Activated CD8-positive, alpha-beta T cell treated with anti-CD3 and anti-CD28 coated beads for 36 hours (primary cell): ENCODE measurements at regions of chr12 and their contacts with region 1.

Region 1: DNA sequence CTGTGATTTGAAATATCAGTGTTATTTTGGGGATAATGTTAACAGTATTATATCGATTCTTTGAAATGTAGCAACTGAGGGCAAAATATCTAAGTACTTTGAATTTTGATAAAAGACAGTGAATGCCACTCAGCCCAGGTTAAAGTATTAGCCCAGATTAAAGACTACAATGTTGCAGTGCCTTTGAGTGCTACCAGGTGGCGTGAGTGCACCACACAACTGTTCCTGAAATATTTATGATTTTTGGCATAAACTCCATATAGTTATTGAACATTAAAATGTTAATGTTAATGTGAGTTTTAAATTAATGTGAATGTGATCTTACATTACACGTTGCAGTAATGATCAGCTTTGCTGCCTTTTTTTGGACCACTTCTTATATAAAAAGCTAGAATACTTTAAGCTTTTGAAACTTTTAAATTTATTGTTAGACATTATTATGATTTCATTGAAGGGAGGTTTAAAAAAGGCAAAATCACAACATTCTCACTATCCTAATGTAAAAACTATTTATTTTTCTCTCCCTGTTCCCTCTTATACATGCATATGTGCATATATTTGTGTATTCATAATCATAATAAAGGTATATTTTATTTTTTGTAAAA is 22.5 kb downstream of the MRPS35 start:
- DNase-seq: peak; percentile 47
- ATAC-seq: peak; percentile 79
- H3K4me3 Mint-ChIP-seq: no peak overlapping the region
- H3K27ac Mint-ChIP-seq: no peak overlapping the region
- H3K4me1 Mint-ChIP-seq: no peaks in the 10 kb centered on the region
- H3K27me3 Mint-ChIP-seq: no peaks in the 10 kb centered on the region
- CTCF ChIP-seq: peak; percentile 82

Region 2: GRCh38 chr12:27940756-27941402 is 207.7 kb after region 1 on chr12:
- CTCF ChIA-PET with region 1: interaction called, 65 read pairs
- POLR2A ChIA-PET with region 1: no interaction called
- intact Hi-C with region 1: loop called (anchors 5 kb)
- DNase-seq: peak; percentile 90
- ATAC-seq: peak; percentile 64
- H3K4me3 Mint-ChIP-seq: no peak overlapping the region
- H3K27ac Mint-ChIP-seq: no peak overlapping the region
- H3K4me1 Mint-ChIP-seq: no peaks in the 10 kb centered on the region
- H3K27me3 Mint-ChIP-seq: peaks cover 16% of the 10 kb centered on the region
- CTCF ChIP-seq: peak; percentile 79